PC-3 (cell line): ENCODE measurements at regions of chr11 and their contacts with region 1.

Region 1: GRCh38 chr11:26276798-26277424 is 55.0 kb upstream of the ANO3 start:
- DNase-seq: peak; percentile 79
- ATAC-seq: peak; percentile 68
- H3K4me3 ChIP-seq: no peak overlapping the region
- H3K27ac ChIP-seq: no peak overlapping the region
- H3K4me1 ChIP-seq: no peaks in the 10 kb centered on the region
- H3K27me3 ChIP-seq: 0 out of 2 replicates have a peak, but pooled peaks cover 9% of the 10 kb centered on the region
- CTCF ChIP-seq: peak; percentile 92

Region 2: DNA sequence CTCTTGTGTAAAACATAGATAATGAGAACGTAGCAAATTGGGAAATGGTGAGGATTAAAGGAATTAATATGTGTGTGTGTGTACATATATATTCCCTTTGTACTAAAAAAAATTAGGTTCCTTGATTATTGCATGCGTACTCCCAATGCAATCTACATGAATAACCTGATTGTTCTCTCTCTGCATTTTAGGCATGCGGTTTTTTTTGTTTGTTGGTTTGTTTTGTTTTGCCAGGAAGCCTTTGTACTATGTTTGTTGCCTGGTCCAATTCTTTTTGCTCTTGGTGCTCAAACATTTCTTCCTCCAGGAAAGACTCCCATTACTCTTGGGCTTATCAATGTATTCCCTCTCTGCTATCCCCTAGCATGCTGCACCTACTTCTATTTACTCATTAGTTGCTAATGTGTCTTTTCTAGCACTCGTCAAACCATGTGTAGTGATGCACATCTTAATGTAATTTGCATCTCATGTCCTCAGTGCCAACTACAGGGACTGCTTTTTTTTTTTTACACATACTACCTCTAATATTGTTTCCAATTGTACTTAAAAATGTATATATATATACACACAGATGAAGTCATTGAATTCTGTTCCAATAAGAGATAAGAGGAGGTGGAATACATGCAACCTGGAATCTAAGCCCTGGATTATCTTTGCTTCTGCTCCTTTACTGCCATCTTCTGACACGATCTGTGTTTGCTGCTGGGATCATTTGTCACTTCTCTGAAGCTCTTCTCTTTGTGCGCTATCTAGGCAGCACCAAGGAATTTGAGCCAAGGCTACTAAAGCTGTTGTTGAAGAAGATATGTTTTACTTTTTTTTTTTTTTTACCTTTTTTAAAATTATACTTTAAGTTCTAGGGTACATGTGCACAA is 142.2 kb before region 1 on chr11:
- CTCF ChIA-PET with region 1: no interaction called
- POLR2A ChIA-PET with region 1: no interaction called
- intact Hi-C with region 1: loop called (anchors 2 kb)
- DNase-seq: peak; percentile 25
- ATAC-seq: peak; percentile 61
- H3K4me3 ChIP-seq: no peak overlapping the region
- H3K27ac ChIP-seq: no peak overlapping the region
- H3K4me1 ChIP-seq: no peaks in the 10 kb centered on the region
- H3K27me3 ChIP-seq: no peaks in the 10 kb centered on the region
- CTCF ChIP-seq: no peak; the same call in 1 of the 2 replicates

Region 3: DNA sequence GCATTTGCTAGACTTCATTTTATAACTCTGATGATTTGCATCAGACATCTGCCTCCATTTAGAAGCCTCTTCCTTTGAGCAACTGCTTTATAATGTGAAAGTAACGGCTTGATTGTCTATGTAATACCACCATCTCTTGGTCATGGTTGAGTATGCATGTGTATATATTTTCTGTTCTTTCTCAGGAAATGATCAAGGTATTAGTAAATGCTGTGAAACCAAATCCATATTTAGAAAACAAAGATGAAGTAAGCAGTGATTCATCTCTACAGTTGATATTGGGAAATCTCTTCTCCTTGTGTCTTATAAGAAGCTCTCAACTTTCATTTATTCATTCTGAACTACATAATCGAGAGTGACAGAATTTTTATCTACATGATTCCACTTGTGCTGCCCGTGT is 49.6 kb before region 1 on chr11:
- CTCF ChIA-PET with region 1: no interaction called
- POLR2A ChIA-PET with region 1: no interaction called
- intact Hi-C with region 1: loop called (anchors 1 kb)
- DNase-seq: peak; percentile 81
- ATAC-seq: peak; percentile 79
- H3K4me3 ChIP-seq: no peak overlapping the region
- H3K27ac ChIP-seq: peak overlapping the region; percentile 88
- H3K4me1 ChIP-seq: peaks cover 43% of the 10 kb centered on the region
- H3K27me3 ChIP-seq: no peaks in the 10 kb centered on the region
- CTCF ChIP-seq: peak; percentile 70

Region 4: GRCh38 chr11:26247340-26247739 is 29.6 kb before region 1 on chr11:
- CTCF ChIA-PET with region 1: no interaction called
- POLR2A ChIA-PET with region 1: no interaction called
- intact Hi-C with region 1: no loop called
- DNase-seq: peak; percentile 26
- ATAC-seq: peak; percentile 67; the same call in 1 of the 2 replicates
- H3K4me3 ChIP-seq: no peak overlapping the region
- H3K27ac ChIP-seq: no peak overlapping the region
- H3K4me1 ChIP-seq: peaks cover 12% of the 10 kb centered on the region
- H3K27me3 ChIP-seq: peaks cover 18% of the 10 kb centered on the region
- CTCF ChIP-seq: no peak